ENCODE measurements at regions of chr5 and their contacts with region 1.

Region 1: DNA sequence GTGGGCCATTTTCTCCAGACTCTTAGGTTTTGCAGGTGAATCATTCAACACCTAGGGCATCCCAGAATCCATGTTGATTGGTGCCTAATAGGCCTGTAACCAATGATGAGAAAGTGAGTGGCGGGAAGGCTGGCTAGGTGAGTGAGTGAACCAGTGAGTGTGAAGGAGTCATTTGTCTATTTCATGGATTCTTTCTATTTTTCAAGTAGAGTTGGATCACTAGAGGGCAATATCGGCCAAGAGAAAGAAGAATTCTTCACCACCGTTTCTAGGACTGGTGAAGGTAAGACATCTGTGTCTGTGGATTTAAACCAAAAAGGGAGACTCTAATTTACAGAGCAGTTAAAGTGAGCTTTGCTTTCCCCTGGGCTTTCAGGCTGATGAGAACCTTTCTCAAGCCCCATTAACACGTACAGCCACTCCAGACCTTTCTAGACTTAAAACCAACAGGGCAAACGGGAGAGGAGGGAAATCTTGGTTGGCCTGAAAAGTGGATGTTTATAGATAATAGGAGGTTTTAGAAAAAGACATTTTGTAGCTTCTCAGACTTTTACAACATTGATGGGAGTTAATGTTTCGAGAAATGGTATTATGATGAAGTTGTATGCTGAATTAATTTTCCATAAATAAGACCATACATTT is 114.3 kb upstream of the IL12B start:
- DNase-seq: peak; percentile 29
- ATAC-seq: peak; percentile 77
- H3K4me3 ChIP-seq: no peak overlapping the region
- H3K27ac ChIP-seq: no peak overlapping the region
- H3K4me1 ChIP-seq: peaks cover 4 to 10% of the 10 kb centered on the region in 2 experiments; a peak in 3 of 4 replicates
- H3K27me3 ChIP-seq: no peaks in the 10 kb centered on the region
- CTCF ChIP-seq: peak; percentile 26 to 76 (median 60); a peak in 3 of 6 replicates
- POLR2A ChIP-seq: no peak
- RAD21 ChIP-seq: peak; percentile 90

Region 2: GRCh38 chr5:159156426-159157238 is 287.9 kb before region 1 on chr5:
- CTCF ChIA-PET with region 1: interaction called, 8 read pairs
- POLR2A ChIA-PET with region 1: no interaction called
- RAD21 ChIA-PET with region 1: no interaction called
- intact Hi-C with region 1: loop called (anchors 5 kb)
- DNase-seq: peak; percentile 57
- ATAC-seq: peak; percentile 89
- H3K4me3 ChIP-seq: no peak overlapping the region
- H3K27ac ChIP-seq: no peak overlapping the region
- H3K4me1 ChIP-seq: no peaks in the 10 kb centered on the region
- H3K27me3 ChIP-seq: no peaks in the 10 kb centered on the region
- CTCF ChIP-seq: peak; percentile 68 to 94 (median 74); a peak in 5 of 6 replicates
- POLR2A ChIP-seq: no peak
- RAD21 ChIP-seq: peak; percentile 88

Region 3: DNA sequence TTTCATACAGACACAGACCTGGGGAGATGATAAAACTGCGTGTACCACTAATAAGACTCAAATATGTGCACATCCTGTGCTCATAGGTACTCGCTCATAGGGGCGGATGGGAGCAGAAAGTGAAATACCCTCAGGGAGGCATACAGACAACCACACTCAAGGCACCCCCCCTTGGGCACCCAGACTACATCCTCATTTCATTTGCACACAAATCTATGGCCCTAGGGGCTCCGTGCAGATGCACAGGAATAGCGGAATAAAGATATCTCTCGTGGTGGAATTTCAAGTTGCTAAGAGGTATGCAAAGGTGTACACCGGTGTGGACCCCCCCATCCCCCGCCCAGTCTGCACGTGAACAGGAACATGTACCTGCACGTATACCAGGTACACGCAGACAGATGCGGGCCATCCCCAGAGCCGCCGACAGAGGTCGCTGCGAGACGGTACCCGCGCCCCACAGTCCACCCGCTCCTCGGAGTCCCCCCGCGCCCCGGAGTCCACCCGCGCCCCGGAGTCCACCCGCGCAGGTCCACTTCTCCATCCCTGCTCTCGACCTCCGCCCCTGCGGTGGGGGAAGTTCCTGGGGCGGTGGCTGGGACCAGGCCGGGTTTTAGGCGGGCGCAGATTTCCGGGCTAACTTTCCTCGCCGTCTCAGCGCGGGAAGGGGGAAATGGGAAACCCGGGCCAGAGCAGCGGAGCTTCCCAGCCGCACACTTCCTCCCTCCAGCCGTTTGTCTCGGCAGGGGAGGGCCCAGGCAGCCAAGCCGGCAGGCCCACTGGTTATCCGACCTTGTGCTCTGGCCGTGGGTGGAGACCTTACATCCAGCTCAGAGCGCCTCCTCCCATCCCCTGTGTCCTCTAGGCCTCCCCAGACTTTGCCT is 113.2 kb before region 1 on chr5:
- CTCF ChIA-PET with region 1: no interaction called
- POLR2A ChIA-PET with region 1: no interaction called
- RAD21 ChIA-PET with region 1: no interaction called
- intact Hi-C with region 1: loop called (anchors 5 kb)
- DNase-seq: no peak
- ATAC-seq: peak; percentile 94
- H3K4me3 ChIP-seq: peak overlapping the region; percentile 57 to 70
- H3K27ac ChIP-seq: peak overlapping the region; percentile 45; the same call in 1 of the 2 replicates
- H3K4me1 ChIP-seq: peaks cover 0 to 23% of the 10 kb centered on the region in 2 experiments; a peak in 2 of 4 replicates
- H3K27me3 ChIP-seq: no peaks in the 10 kb centered on the region
- CTCF ChIP-seq: peak; percentile 61 to 83 (median 73); a peak in 5 of 6 replicates
- POLR2A ChIP-seq: no peak
- RAD21 ChIP-seq: peak; percentile 79

Region 4: DNA sequence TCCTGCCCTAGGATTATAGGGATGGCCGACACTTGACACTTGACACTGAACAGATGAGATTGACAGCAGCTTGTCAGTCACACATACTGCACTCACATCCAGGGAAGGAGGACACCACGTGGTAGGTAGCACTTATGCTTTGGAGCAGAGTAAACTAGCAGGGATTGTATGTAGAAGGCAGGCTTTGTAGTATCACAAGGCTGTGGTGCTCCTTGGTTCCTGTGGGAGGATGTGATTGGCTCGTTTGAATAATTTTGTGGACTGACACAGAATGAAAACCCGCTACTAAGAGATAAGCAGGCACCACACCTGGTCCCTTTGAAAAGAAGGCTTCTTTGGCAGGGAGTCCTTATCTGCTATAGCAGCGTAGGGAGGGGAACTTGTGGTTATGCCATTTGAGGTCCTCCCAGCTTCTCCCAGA is 50.7 kb before region 1 on chr5:
- CTCF ChIA-PET with region 1: no interaction called
- POLR2A ChIA-PET with region 1: no interaction called
- RAD21 ChIA-PET with region 1: no interaction called
- intact Hi-C with region 1: no loop called
- DNase-seq: no peak
- ATAC-seq: 0 out of 2 replicates have a peak, but pooled peaks have one; percentile 34
- H3K4me3 ChIP-seq: no peak overlapping the region
- H3K27ac ChIP-seq: no peak overlapping the region
- H3K4me1 ChIP-seq: no peaks in the 10 kb centered on the region
- H3K27me3 ChIP-seq: no peaks in the 10 kb centered on the region
- CTCF ChIP-seq: no peak
- POLR2A ChIP-seq: no peak
- RAD21 ChIP-seq: no peak

Region 5: DNA sequence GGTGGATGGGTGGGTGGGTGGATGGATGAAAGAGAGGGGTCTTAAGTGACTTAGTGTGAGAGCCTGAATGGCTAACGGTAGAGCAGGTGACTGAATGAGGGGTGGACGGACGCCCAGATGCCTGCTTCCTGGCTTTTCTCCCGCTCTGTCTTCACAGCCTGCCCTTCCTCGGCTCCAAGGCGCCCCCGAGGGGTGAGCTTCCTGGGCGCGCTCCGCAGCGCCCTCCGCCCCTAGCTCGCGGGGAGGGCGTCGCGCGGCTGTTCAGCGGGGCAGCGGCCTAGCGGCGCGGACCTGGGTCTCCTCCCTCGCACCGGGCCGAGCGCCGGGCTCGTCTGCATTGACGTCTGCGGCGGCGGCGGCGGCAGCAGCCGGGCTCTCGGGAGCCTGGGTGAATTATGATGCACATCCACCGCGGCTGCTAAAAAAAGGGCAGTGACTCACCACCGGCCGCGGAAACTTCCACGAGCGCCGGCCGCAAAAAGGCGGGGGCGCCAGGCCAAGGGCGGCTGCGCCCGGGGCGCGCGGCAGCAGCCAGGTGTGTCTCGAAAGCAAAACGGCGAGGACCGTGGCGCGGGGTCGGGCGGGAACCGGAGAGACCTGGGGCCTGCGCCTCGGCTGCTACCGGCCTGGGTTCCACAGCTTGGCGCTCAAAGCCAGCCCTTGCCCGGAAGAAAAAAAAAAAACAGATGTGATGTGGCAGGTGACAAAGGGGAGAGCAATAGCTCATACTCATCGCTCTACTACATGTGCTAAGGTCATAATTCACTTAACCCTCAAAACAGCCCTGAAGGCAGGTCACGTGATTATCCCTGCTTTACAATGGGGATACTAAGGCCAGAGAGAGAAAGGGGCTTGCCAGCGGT is 328.7 kb after region 1 on chr5:
- CTCF ChIA-PET with region 1: no interaction called
- POLR2A ChIA-PET with region 1: no interaction called
- RAD21 ChIA-PET with region 1: no interaction called
- intact Hi-C with region 1: loop called (anchors 10 kb)
- DNase-seq: peak; percentile 44
- ATAC-seq: peak; percentile 91
- H3K4me3 ChIP-seq: peak overlapping the region; percentile 29 to 56
- H3K27ac ChIP-seq: peak overlapping the region; percentile 56
- H3K4me1 ChIP-seq: peaks cover 9 to 34% of the 10 kb centered on the region in 2 experiments; a peak in 3 of 4 replicates
- H3K27me3 ChIP-seq: no peaks in the 10 kb centered on the region
- CTCF ChIP-seq: peak; percentile 20 to 47 (median 23); a peak in 2 of 6 replicates
- POLR2A ChIP-seq: no peak
- RAD21 ChIP-seq: peak; percentile 57

Region 6: DNA sequence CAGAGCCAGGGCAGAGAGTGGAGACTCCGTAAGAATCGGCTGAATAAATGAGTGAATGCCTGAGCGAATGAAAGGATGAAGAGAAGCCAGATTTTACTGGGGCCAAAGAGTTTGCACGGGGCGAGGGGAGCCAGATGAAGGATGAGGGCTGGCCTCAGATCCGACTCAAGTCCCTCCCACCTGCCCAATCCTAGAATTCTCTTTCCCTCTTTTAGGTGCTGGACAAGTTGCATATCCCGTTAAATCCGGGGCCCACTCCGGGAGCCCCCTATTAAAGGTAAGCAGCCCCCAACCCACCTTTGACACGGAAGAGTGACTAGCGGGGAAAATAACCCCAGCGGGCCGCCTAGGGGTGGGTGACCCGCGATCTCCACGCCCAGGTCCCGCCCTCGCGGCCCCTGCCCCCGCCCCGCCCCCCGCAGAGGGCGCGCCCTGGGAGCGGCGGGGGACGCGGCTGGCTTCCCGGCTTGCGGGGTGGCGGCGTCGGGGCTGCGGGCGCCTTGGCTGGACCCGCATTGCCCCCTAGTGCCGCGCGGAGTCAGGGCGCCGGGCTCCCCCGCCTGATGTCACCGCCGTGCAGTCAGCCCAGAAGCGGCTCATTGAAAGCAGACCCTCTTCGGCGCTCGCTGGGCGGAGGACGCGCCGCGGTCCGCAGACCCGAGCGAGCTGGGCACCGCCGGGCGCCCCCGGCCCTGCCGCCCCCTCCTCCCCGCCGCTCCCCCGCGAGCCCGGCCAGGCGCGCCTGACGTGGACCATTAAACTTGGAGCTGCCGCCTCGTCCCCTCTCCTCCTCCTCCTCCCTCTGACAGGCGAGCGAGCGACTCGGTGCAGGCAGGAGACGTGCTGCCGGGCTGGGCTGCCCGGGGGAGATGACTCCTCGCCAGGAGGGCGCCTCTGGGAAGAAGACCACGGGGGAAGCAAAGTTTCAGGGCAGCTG is 471.6 kb after region 1 on chr5 and contains the start of gene ADRA1B:
- CTCF ChIA-PET with region 1: no interaction called
- POLR2A ChIA-PET with region 1: no interaction called
- RAD21 ChIA-PET with region 1: no interaction called
- intact Hi-C with region 1: loop called (anchors 2 kb)
- DNase-seq: no peak
- ATAC-seq: peak; percentile 89
- H3K4me3 ChIP-seq: no peak within 1 kb of the TSS
- H3K27ac ChIP-seq: no peak within 1 kb of the TSS
- H3K4me1 ChIP-seq: peaks cover 12 to 30% of the 10 kb centered on the region in 2 experiments
- H3K27me3 ChIP-seq: peaks cover 16% of the 10 kb centered on the region; the same call in 1 of the 2 replicates
- CTCF ChIP-seq: peak; percentile 34 to 53 (median 40); a peak in 4 of 6 replicates
- POLR2A ChIP-seq: no peak
- RAD21 ChIP-seq: peak; percentile 79
- total RNA-seq, gene ADRA1B: not detected

Measured in HCT116 (cell line).